ENCODE measurements at regions of chr4 and their contacts with region 1.

Region 1: DNA sequence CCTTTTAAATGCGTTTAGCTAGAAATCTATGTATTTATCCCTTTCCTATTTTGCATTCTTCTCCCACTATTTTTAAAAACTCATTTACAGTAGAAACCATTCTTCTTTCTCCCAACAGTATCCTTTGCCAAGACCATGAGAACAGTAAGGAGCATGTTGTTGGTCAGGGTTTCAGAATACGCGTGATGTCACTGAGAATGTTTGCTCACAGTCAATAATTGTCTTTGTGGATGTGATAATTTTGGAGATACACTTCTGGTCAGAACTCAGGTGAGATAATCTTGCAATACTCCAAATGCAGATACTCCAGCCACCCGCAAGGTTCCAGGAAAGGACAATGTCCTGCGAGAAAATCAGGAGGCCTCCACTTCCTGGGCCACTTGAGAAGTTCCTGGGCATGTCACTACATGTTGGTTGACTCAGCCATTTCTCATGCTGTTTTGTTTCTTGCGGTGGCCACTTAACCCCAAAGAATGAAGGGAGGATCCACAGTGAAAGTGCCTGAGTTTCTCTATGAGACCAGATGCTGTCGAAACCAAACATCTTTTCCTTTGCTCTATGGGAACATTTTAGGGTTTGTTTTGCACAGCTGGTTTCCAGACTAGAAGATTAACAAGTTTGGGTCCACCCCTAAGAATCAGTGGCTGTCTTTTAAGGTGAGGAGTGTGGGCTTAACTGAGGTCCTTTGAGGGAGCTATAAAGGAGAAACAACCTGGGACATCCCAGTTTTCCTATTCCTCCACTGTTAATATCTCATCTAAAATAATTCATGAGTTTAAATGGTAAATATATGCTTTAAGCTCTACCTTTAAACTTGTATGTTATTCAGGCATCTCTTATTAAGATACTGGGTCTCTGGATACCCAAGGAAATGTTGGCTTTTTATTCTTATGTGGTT is 116.0 kb downstream of the SOWAHB start:
- DNase-seq: peak; percentile 88
- ATAC-seq: peak; percentile 90
- H3K4me3 ChIP-seq: peak overlapping the region; percentile 26; the same call in 1 of the 2 replicates
- H3K27ac ChIP-seq: peak overlapping the region; percentile 92
- H3K4me1 ChIP-seq: peaks cover 31% of the 10 kb centered on the region
- H3K27me3 ChIP-seq: no peaks in the 10 kb centered on the region
- CTCF ChIP-seq: no peak

Region 2: DNA sequence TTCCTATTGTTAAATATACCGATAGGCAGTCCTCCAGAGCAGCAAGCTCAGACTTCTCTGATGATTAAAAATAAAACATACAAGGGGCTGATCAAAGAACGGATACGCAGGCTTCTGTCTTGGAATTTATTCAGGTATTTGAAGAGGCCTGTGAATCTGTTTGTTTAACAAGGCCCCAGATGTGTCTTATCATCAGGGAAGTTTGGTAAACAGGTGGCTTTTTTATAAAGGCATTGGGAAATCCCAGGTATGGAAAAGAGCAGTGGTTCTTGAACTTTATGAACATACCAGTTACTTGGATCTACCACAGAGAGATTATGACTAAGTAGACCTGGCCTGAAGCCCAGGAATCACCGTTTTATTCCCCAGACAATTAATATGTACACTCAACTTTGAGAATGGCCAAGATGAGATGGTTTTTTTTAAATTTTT is 68.1 kb after region 1 on chr4:
- CTCF ChIA-PET with region 1: no interaction called
- POLR2A ChIA-PET with region 1: no interaction called
- intact Hi-C with region 1: loop called (anchors 2 kb)
- DNase-seq: peak; percentile 97
- ATAC-seq: peak; percentile 90
- H3K4me3 ChIP-seq: no peak overlapping the region
- H3K27ac ChIP-seq: 0 out of 2 replicates have a peak overlapping the region, but pooled peaks have one; percentile 22
- H3K4me1 ChIP-seq: peaks cover 8% of the 10 kb centered on the region
- H3K27me3 ChIP-seq: no peaks in the 10 kb centered on the region
- CTCF ChIP-seq: no peak

Region 3: DNA sequence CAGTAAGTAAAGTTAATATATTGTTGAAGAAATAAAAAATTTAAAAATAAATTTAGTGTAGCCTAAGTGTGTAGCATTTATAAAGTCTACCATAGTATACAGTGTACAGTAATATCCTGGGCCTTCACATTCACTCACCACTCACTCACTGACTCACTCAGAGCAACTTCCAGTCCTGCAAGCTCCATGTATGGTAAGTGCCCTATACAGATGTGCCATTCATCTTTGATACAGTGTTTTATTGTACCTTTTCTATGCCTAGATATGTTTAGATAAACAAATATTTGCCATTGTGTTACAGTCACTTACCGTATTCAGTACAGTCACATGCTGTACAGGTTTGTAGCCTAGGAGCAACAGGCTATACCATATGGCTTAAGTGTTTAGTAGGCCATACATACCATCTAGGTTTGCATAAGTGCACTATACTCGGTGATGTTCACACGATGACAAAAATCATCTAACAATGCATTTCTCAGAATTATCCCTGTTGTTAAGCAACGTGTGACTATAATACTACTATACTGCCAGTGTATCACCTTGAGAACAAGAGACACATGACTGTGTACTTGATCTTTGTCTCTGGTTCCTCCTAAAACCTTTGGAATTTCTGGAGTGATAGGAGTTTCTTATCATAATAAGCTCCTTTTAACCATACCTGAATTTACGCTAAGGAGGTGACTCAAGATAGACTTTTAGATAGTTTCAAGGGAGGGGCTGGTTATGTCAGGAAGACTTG is 141.8 kb after region 1 on chr4:
- CTCF ChIA-PET with region 1: no interaction called
- POLR2A ChIA-PET with region 1: no interaction called
- intact Hi-C with region 1: no loop called
- DNase-seq: peak; percentile 48
- ATAC-seq: no peak; the same call in 1 of the 2 replicates
- H3K4me3 ChIP-seq: no peak overlapping the region
- H3K27ac ChIP-seq: no peak overlapping the region
- H3K4me1 ChIP-seq: no peaks in the 10 kb centered on the region
- H3K27me3 ChIP-seq: no peaks in the 10 kb centered on the region
- CTCF ChIP-seq: no peak

Measured in PC-3 (cell line).